Heart right ventricle (tissue), 16 donors: ENCODE measurements at regions of chr2 and their contacts with region 1.

Region 1: DNA sequence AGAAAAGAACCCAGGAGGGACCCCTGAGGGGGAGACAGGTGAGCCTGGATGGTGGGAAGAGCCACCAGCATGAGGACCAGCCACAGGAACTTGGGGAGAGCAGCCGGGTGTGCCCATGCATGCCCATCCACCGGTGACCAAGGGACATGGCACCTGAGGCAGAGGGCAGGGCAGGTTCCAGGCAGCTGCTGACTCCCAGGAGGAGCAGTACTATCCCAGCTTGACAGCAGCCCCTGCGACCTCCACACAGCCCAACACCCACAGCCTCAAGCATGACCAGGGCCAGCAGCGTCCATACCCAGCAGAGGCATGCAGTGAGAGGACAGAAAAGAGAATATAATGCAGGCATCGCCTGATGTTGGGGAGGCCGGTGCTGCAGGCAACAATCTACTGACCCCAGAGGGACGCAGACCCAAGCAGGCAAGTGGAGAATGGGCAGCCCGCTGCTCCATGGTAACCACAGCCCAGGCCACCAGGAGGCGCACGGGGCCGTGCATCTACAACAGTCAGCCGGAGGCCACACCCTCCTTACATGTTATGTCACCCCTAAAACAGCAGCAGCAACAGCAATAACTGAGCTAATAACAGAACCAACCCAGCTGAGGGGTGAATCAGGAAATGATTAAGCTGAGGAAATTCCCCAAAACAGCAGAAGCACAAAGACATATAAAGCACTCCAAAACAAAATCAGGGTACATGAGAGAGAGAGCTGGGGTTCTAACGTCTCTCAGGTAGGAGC is 44.1 kb downstream of the ANKMY1 start:
- DNase-seq: peak; percentile 71 to 81
- ATAC-seq: peak; percentile 84 to 97 (median 92)
- H3K4me3 ChIP-seq: no peak overlapping the region
- H3K27ac ChIP-seq: peak overlapping the region in 1 of 10 donors; percentile 51
- H3K4me1 ChIP-seq: peaks cover 0 to 11% (median 0%) of the 10 kb centered on the region in 9 donors
- H3K27me3 ChIP-seq: peaks cover 0 to 2% (median 0%) of the 10 kb centered on the region in 7 donors
- CTCF ChIP-seq: peak; percentile 66 to 96 (median 80)

Region 2: GRCh38 chr2:240326246-240326645 is 187.5 kb before region 1 on chr2:
- intact Hi-C with region 1: no loop called
- DNase-seq: no peak
- ATAC-seq: no peak
- H3K4me3 ChIP-seq: no peak overlapping the region
- H3K27ac ChIP-seq: no peak overlapping the region
- H3K4me1 ChIP-seq: peaks cover 0 to 10% (median 5%) of the 10 kb centered on the region in 9 donors
- H3K27me3 ChIP-seq: peaks cover 0 to 2% (median 0%) of the 10 kb centered on the region in 7 donors
- CTCF ChIP-seq: no peak

Region 3: DNA sequence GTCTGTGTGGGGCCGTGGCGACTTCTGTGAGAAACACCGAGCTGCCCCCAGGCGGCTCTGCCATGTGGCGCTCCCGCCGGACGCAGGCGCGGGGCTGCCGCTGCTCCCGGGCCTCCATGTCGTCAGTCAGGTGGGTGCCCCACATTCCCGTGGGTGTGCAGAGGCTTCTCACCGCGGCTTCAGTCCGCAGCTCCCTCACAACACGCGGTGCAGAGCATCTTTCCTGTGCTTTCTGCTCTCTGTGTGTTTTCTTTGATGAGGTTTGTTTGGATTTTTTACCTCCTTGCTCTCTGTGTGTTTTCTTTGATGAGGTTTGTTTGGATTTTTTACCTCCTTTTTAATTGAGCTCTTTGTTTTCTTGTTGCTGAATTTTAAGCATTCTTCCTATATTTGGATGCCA is 190.9 kb after region 1 on chr2:
- intact Hi-C with region 1: loop called in 6 of 10 experiments (anchors 5 to 10 kb)
- DNase-seq: peak in 1 of 2 donors; percentile 4
- ATAC-seq: no peak
- H3K4me3 ChIP-seq: no peak overlapping the region
- H3K27ac ChIP-seq: no peak overlapping the region
- H3K4me1 ChIP-seq: peaks cover 0 to 5% (median 0%) of the 10 kb centered on the region in 9 donors
- H3K27me3 ChIP-seq: peaks cover 0 to 78% (median 43%) of the 10 kb centered on the region in 7 donors
- CTCF ChIP-seq: no peak

Region 4: DNA sequence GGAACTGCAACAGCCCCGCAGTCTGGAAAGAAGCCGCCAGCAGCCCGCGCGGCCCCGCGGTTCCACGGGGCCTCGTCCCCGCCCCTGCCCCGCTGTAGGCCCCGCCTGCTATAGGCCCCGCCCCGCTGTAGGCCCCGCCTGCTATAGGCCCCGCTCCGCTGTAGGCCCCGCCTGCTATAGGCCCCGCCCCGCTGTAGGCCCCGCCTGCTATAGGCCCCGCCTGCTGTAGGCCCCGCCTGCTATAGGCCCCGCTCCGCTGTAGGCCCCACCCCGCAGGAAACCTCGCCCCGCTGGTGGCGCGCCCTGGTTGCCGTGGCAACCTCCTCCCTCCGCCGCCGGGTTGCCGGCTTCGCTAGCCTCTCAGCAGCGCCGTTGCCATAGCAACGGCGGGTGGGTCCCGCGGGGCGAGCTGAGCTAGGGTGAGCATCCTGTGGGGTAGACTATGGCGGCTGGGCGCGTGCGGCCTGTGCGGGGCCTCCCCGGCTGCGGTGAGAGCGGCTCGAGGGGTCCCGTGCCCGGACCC is 318.5 kb after region 1 on chr2:
- intact Hi-C with region 1: loop called in 5 of 10 experiments (anchors 5 to 10 kb)
- DNase-seq: peak; percentile 89 to 94
- ATAC-seq: peak; percentile 72 to 94 (median 86)
- H3K4me3 ChIP-seq: peak overlapping the region in 9 of 10 donors; percentile 20 to 50 (median 41)
- H3K27ac ChIP-seq: no peak overlapping the region
- H3K4me1 ChIP-seq: peaks cover 7 to 19% (median 17%) of the 10 kb centered on the region in 9 donors
- H3K27me3 ChIP-seq: peaks cover 0 to 51% (median 38%) of the 10 kb centered on the region in 7 donors
- CTCF ChIP-seq: no peak

Region 5: GRCh38 chr2:240840435-240841080 is 326.8 kb after region 1 on chr2:
- intact Hi-C with region 1: loop called in 8 of 10 experiments (anchors 5 to 10 kb)
- DNase-seq: peak; percentile 51 to 64
- ATAC-seq: peak; percentile 70 to 86 (median 76)
- H3K4me3 ChIP-seq: no peak overlapping the region
- H3K27ac ChIP-seq: no peak overlapping the region
- H3K4me1 ChIP-seq: peaks cover 0 to 9% (median 4%) of the 10 kb centered on the region in 9 donors
- H3K27me3 ChIP-seq: peaks cover 0 to 48% (median 14%) of the 10 kb centered on the region in 7 donors
- CTCF ChIP-seq: peak; percentile 21 to 73 (median 62)